Activated T-helper 1 cell treated with anti-CD3 and anti-CD28 coated beads, Interleukin-12 subunit alpha, Interleukin-12 subunit beta, Interleukin-2, Interleukin-4 antibody, amounts not matched to agents 30 ng/mL and 10 ng/mL and 1 ng/mL, durations not matched to agents 14 hours and 24 hours and 36 hours (primary cell): ENCODE measurements at regions of chr3 and their contacts with region 1.

Region 1: DNA sequence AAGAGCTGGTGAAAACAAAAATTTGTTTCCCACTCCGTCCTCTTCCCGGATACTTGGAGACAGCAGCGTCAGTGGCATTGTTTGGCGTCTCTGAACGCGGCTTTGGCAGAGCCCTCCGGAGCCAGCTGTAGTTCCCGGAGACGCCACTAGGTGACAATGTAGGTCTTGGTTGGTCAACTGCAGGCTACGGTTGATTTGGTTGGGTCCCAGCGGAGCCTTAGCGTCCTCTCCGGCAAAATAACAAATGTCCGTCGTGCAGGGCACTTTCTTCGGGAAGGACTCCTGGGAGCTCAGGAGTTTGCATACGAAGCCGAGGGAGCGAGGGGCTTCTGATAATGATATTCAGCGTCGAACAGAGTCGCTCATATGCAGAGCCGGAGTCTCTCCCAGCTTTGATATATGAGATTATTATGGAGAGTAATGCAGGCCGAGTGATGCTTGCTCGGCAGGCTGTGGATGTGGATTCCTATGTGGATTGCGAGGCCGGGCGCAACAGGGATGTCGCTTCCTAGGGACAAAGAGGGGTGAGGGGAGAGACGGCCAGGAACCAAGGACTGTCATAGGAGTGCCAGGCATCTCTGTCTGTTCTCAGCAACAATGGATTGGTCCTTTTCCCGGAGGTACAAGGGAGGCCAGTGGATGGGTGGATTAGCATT is 74.8 kb downstream of the IL20RB start:
- DNase-seq: peak; percentile 55
- H3K4me3 Mint-ChIP-seq: peak overlapping the region; percentile 66
- H3K27ac Mint-ChIP-seq: no peak overlapping the region
- H3K4me1 Mint-ChIP-seq: peaks cover 10% of the 10 kb centered on the region
- H3K27me3 Mint-ChIP-seq: peaks cover 24% of the 10 kb centered on the region

Region 2: DNA sequence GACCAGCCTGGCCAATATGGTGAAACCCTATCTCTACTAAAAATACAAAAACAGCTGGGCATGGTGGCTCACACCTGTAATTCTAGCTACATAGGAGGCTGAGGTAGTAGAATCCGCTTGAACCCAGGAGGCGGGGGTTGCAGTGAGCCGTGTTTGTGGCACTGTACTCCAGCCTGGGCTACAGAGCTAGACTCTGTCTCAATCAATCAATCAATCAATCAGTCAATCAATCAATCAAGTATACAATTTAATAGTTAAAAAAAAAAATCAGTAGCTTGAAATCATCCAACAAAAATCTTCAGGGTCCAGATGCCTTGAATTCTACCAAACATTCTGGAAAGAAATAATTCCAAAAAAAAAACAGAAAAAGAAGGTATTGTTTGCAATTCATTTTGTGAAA is 477.1 kb before region 1 on chr3:
- intact Hi-C with region 1: no loop called
- DNase-seq: no peak
- H3K4me3 Mint-ChIP-seq: no peak overlapping the region
- H3K27ac Mint-ChIP-seq: no peak overlapping the region
- H3K4me1 Mint-ChIP-seq: no peaks in the 10 kb centered on the region
- H3K27me3 Mint-ChIP-seq: no peaks in the 10 kb centered on the region

Region 3: GRCh38 chr3:137946345-137946973 is 913.9 kb after region 1 on chr3:
- intact Hi-C with region 1: loop called (anchors 2 kb)
- DNase-seq: peak; percentile 7
- H3K4me3 Mint-ChIP-seq: no peak overlapping the region
- H3K27ac Mint-ChIP-seq: no peak overlapping the region
- H3K4me1 Mint-ChIP-seq: peaks cover 5% of the 10 kb centered on the region
- H3K27me3 Mint-ChIP-seq: peaks cover 12% of the 10 kb centered on the region